Right cardiac atrium (tissue), 5 donors: ENCODE measurements at regions of chr12 and their contacts with region 1.

Region 1: GRCh38 chr12:43878050-43878449 is 42.2 kb downstream of the TMEM117 start:
- DNase-seq: no peak
- ATAC-seq: no peak
- H3K4me3 ChIP-seq: no peak overlapping the region
- H3K27ac ChIP-seq: no peak overlapping the region
- H3K4me1 ChIP-seq: no peaks in the 10 kb centered on the region
- H3K27me3 ChIP-seq: no peaks in the 10 kb centered on the region

Region 2: GRCh38 chr12:43805860-43806736 is 72.0 kb before region 1 on chr12 and contains the start of gene TWF1:
- intact Hi-C with region 1: loop called in 2 of 4 experiments (anchors 10 kb)
- DNase-seq: peak; percentile 88 to 96 (median 96)
- ATAC-seq: peak; percentile 100
- H3K4me3 ChIP-seq: peak within 1 kb of the TSS; percentile 81
- H3K27ac ChIP-seq: peak within 1 kb of the TSS; percentile 99
- H3K4me1 ChIP-seq: no peaks in the 10 kb centered on the region
- H3K27me3 ChIP-seq: no peaks in the 10 kb centered on the region
- total RNA-seq, gene TWF1: 13.0 to 30.5 (median 20.1) TPM